Tibial artery (tissue), 4 donors: ENCODE measurements at regions of chr20 and their contacts with region 1.

Region 1: GRCh38 chr20:7859356-7859802 is 80.9 kb downstream of the HAO1 start:
- DNase-seq: no peak
- H3K4me3 ChIP-seq: no peak overlapping the region
- H3K27ac ChIP-seq: no peak overlapping the region
- H3K4me1 ChIP-seq: no peaks in the 10 kb centered on the region
- H3K27me3 ChIP-seq: no peaks in the 10 kb centered on the region
- CTCF ChIP-seq: peak; percentile 48 to 49

Region 2: GRCh38 chr20:6828794-6829423 is 1030.5 kb before region 1 on chr20:
- intact Hi-C with region 1: loop called (anchors 5 kb)
- DNase-seq: peak in 1 of 2 donors; percentile 70
- H3K4me3 ChIP-seq: no peak overlapping the region
- H3K27ac ChIP-seq: no peak overlapping the region
- H3K4me1 ChIP-seq: no peaks in the 10 kb centered on the region
- H3K27me3 ChIP-seq: peaks cover 0 to 6% of the 10 kb centered on the region in 2 donors
- CTCF ChIP-seq: peak; percentile 51 to 61

Region 3: GRCh38 chr20:7459083-7459482 is 400.3 kb before region 1 on chr20:
- intact Hi-C with region 1: no loop called
- DNase-seq: no peak
- H3K4me3 ChIP-seq: no peak overlapping the region
- H3K27ac ChIP-seq: no peak overlapping the region
- H3K4me1 ChIP-seq: no peaks in the 10 kb centered on the region
- H3K27me3 ChIP-seq: no peaks in the 10 kb centered on the region
- CTCF ChIP-seq: no peak

Region 4: DNA sequence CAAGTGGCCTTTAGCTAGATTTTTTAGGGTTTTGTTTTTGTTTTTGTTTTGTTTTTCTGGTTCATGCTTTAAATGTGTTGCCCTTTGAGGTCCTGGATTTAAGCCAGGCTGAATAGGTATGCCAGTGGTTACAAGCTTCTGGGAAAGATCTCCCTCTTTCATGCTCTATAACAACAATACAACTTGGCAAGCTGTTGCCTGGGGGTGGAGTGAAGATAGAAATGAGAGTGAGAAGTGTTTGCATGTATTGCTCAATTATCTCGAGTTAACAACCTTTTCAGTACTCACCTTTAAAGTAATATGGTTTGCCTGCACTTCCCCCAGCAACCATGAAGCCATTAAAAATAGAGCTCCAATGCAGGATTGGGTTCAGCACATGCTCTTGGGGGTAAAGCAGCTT is 100.1 kb after region 1 on chr20:
- intact Hi-C with region 1: no loop called
- DNase-seq: no peak
- H3K4me3 ChIP-seq: no peak overlapping the region
- H3K27ac ChIP-seq: no peak overlapping the region
- H3K4me1 ChIP-seq: no peaks in the 10 kb centered on the region
- H3K27me3 ChIP-seq: no peaks in the 10 kb centered on the region
- CTCF ChIP-seq: no peak